MCF 10A (cell line): ENCODE measurements at regions of chr1 and their contacts with region 1.

Region 1: DNA sequence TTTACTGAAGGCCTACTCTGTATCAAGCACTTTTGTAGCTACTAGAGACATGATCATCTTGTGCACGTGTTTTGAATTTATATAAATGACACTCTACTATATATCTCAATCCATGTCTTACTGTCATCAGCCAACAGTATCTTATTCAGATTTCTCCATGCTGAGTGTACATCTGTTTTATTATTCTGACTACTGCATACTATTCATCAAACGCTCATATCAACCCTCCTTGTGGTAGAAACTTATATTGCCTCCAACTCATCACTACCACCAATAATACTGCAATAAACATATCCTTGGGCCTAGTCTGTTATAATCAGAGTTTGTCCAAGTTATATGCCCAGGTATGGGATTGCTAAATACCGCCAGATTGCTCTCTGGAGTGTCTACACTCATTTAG is 81.6 kb upstream of the IRF2BP2 start:
- DNase-seq: peak; percentile 53
- H3K4me3 Mint-ChIP-seq: no peak overlapping the region
- H3K27ac Mint-ChIP-seq: no peak overlapping the region
- H3K4me1 Mint-ChIP-seq: no peaks in the 10 kb centered on the region
- H3K27me3 Mint-ChIP-seq: no peaks in the 10 kb centered on the region
- CTCF ChIP-seq: peak; percentile 30

Region 2: DNA sequence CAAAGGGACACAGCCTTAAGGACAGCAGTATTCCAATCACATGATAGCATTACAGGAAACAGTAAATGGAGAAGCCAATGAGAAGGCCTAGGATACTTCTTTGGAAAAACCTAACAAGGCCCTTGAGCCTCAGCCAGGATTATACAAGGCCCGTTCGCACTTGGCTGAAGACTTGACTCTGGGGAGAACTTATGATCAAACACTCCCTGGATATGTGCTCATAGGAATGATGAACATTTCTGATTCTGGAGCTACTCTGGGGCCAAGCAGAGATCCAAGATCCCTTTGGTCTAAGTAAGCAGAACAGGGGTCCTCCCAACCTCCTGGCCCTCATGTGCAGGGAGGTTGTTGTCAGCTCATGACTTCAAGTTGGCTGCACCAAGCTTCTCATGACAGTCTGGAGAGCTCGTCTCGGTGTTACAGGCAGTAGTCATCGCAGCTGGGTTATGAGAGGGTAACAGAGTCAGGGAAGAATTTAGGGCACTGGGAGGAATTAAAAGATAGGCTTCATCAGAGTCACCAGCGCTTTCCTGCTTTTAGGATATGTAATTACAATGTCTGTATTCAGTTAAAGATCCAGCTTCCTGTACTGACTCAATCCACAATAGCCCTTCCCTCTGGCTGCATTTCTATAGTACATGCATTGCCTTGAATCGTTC is 10.9 kb after region 1 on chr1:
- CTCF ChIA-PET with region 1: interaction called, 6 read pairs
- POLR2A ChIA-PET with region 1: interaction called, 23 read pairs
- intact Hi-C with region 1: no loop called
- DNase-seq: no peak
- H3K4me3 Mint-ChIP-seq: no peak overlapping the region
- H3K27ac Mint-ChIP-seq: no peak overlapping the region
- H3K4me1 Mint-ChIP-seq: peaks cover 3% of the 10 kb centered on the region
- H3K27me3 Mint-ChIP-seq: no peaks in the 10 kb centered on the region
- CTCF ChIP-seq: no peak

Region 3: DNA sequence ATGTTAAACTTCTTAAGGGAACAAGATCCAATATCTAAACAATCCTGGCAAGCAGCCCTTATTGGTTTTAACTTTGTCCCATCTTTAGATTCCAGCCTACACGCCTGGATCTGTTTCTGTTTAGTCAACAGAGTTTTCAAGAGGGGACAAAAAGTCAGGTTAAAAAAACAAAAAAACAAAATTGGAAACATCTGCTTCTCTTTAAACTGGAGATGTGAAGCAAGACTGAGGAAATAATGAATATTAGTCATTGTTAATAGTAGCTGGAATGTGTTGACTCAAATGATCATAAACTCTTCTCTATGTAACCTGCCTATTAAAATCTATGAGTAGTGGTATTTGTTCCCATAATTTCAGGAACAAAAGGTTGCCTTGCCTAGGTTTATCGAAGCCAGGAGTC is 1318.3 kb after region 1 on chr1:
- CTCF ChIA-PET with region 1: no interaction called
- POLR2A ChIA-PET with region 1: no interaction called
- intact Hi-C with region 1: no loop called
- DNase-seq: peak; percentile 69
- H3K4me3 Mint-ChIP-seq: no peak overlapping the region
- H3K27ac Mint-ChIP-seq: peak overlapping the region; percentile 78
- H3K4me1 Mint-ChIP-seq: peaks cover 15% of the 10 kb centered on the region
- H3K27me3 Mint-ChIP-seq: no peaks in the 10 kb centered on the region
- CTCF ChIP-seq: no peak